ENCODE measurements at regions of chr5 and their contacts with region 1.

Region 1: DNA sequence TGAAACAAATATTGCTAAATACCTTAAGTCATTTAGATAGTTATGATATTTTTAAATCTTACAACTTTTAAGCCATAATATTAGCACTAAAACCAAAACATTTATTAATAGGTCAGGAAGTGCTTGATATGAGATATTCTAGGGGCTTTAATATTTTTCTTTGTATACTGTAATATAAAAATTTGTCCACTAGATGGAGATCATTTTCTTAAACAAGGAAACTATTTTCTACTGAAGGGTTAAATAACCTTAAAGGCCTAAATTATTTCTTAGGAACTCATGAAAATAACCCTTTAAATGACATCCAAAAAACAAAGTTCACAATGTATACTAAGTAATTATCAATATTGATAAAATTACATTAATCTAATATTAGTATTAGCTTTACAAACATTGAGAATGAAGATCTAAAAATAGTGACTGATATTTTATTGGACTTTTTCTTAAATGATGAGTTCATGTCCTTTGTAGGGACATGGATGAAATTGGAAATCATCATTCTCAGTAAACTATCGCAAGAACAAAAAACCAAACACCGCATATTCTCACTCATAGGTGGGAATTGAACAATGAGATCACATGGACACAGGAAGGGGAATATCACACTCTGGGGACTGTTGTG is 635.7 kb downstream of the RAB3C start:
- DNase-seq: no peak
- ATAC-seq: no peak

Region 2: GRCh38 chr5:59367791-59368394 is 149.4 kb after region 1 on chr5:
- intact Hi-C with region 1: loop called (anchors 5 to 10 kb)
- DNase-seq: peak; percentile 52
- ATAC-seq: peak in 1 of 2 donors; percentile 56

Measured in left cardiac atrium (tissue), 4 donors.